ENCODE measurements at regions of chr14 and their contacts with region 1.

Region 1: DNA sequence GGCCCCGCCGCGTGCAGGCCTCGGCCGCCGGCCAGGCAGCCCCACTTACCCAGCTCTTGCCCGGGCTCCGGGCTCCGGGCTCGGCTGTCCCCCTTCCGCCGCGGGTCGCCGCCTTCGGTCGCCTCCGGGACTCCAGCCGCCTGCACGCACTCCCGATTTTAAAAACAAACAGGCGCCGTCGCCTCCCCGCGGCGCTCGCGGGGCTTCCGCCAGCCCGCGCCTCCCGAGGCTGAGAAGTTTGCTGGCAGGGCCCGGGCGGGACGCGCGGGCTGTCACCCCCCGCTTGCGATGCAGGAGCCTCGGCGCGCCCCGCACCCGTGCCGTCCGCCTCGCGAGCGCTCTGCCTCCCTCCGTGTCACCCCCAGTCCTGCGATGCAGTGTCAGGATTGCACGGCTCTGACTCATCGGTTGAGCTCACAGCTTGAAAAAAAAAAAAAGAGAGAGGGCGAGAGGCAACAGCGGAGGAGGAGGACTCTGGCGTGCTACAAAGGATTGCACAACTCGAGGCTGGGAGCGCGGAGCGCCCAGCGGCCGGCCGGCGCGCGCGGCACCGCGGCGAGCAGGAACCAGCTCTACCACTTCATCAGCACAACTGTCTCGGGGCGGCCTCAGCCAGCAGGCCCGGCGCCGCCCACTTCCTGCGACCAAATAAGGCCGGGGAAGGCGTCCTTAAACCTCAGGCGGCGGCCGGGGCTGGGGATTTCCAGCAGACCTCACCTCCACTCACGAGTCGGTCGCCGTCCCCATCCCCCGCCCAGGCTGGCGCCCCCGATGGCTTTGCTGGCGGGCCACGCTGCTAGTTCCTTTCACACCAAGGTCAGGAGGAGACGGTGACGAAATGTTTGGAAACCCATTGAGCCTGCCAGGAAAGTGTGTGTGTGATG is 45.8 kb upstream of the PNMA1 start:
- DNase-seq: peak; percentile 94 to 95
- ATAC-seq: peak; percentile 83 to 89 (median 86)
- H3K4me3 ChIP-seq: peak overlapping the region; percentile 54 to 90 (median 80)
- H3K27ac ChIP-seq: peak overlapping the region; percentile 93 to 100 (median 98)
- H3K4me1 ChIP-seq: peaks cover 57 to 89% (median 86%) of the 10 kb centered on the region in 9 donors
- H3K27me3 ChIP-seq: no peaks in the 10 kb centered on the region
- CTCF ChIP-seq: peak in 1 of 9 donors; percentile 8

Region 2: GRCh38 chr14:73785873-73786695 is 26.1 kb after region 1 on chr14:
- intact Hi-C with region 1: loop called in 3 of 10 experiments (anchors 1 to 2 kb)
- DNase-seq: peak; percentile 65 to 73
- ATAC-seq: peak; percentile 67 to 78 (median 74)
- H3K4me3 ChIP-seq: peak overlapping the region; percentile 48 to 98 (median 76)
- H3K27ac ChIP-seq: peak overlapping the region; percentile 97 to 100 (median 98)
- H3K4me1 ChIP-seq: peaks cover 44 to 89% (median 77%) of the 10 kb centered on the region in 9 donors
- H3K27me3 ChIP-seq: no peaks in the 10 kb centered on the region
- CTCF ChIP-seq: peak in 4 of 9 donors; percentile 13 to 38 (median 26)

Region 3: GRCh38 chr14:74018586-74019407 is 258.8 kb after region 1 on chr14 and contains the starts of genes BBOF1 and ENTPD5:
- intact Hi-C with region 1: no loop called
- DNase-seq: peak; percentile 82 to 90
- ATAC-seq: peak; percentile 95 to 99 (median 98)
- H3K4me3 ChIP-seq: peak within 1 kb of the TSS; percentile 72 to 98 (median 90)
- H3K27ac ChIP-seq: peak within 1 kb of the TSS; percentile 91 to 99 (median 98)
- H3K4me1 ChIP-seq: peaks cover 0 to 17% (median 12%) of the 10 kb centered on the region in 9 donors
- H3K27me3 ChIP-seq: no peaks in the 10 kb centered on the region
- CTCF ChIP-seq: peak in 1 of 9 donors; percentile 23
- total RNA-seq, gene BBOF1: 1.8 to 5.9 (median 3.4) TPM
- total RNA-seq, gene ENTPD5: 6.5 to 10.0 (median 8.2) TPM